MCF 10A (cell line): ENCODE measurements at regions of chr2 and their contacts with region 1.

Region 1: DNA sequence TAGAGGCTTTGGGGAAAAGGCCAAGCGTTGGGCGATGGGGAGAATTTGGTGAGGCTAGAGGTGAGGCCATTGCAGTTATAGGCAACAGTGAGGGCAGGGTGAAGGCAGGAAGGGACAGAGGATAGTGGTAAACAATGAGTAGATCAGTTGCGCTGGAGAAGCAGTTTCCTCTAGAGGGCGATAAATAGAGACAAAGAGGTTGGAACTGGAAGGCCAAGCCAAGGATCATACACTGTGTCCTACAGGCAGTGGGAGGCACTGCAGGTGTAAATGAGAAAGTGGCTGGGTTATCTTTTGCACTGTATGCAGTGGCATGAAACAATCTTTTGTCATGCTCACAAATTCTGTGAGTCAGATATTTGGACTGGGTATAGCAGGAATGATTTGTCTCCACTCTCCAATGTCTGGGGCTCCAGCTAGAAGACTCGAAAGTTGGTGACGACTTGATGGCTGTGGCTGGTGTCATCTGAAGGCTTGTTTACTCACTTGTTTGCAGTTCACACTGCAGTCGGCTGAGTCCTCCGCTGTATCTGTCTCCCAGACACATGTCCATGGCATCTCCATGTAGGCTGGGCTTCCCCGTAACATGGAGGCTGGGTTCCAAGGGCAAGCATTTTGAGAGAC is 82.1 kb downstream of the TNP1 start:
- DNase-seq: peak; percentile 88
- H3K4me3 Mint-ChIP-seq: no peak overlapping the region
- H3K27ac Mint-ChIP-seq: no peak overlapping the region
- H3K4me1 Mint-ChIP-seq: peaks cover 12% of the 10 kb centered on the region
- H3K27me3 Mint-ChIP-seq: no peaks in the 10 kb centered on the region
- CTCF ChIP-seq: peak; percentile 82

Region 2: DNA sequence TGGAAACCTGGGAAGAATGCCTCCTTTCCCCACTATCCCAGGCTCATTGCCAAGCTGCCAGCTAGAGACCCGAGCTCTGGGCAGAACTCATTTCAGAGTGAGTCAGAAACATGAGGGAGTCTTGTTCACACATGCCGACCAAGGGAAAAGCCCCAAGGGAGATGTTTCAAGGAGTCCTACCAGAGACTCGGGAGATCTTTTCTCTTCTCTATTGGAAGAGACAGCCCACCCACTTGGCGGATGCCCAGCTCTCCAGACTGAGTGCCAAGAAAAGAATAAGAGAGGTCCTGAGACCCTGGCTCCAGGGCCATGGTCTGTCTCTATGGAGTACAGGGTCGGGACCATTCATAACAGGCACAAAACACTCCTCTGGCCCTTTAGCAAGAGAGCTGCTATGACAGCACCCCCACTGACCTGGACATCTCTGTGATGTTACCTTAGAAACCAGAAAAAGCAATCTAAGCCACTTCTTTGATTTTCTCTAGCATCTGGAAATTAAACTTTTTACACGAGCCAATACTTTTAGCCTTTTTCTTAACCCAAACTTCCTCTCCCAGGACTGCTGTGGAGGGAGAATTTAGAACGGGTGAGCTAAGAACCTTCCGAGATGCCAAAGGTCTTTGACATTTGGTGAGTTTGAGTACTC is 63.9 kb before region 1 on chr2:
- CTCF ChIA-PET with region 1: no interaction called
- POLR2A ChIA-PET with region 1: interaction called, 3 read pairs
- intact Hi-C with region 1: loop called (anchors 5 kb)
- DNase-seq: peak; percentile 98
- H3K4me3 Mint-ChIP-seq: no peak overlapping the region
- H3K27ac Mint-ChIP-seq: peak overlapping the region; percentile 55
- H3K4me1 Mint-ChIP-seq: peaks cover 28% of the 10 kb centered on the region
- H3K27me3 Mint-ChIP-seq: no peaks in the 10 kb centered on the region
- CTCF ChIP-seq: no peak

Region 3: GRCh38 chr2:216789081-216789480 is 11.3 kb after region 1 on chr2:
- CTCF ChIA-PET with region 1: interaction called, 13 read pairs
- POLR2A ChIA-PET with region 1: interaction called, 3 read pairs
- intact Hi-C with region 1: no loop called
- DNase-seq: no peak
- H3K4me3 Mint-ChIP-seq: no peak overlapping the region
- H3K27ac Mint-ChIP-seq: no peak overlapping the region
- H3K4me1 Mint-ChIP-seq: peaks cover 14% of the 10 kb centered on the region
- H3K27me3 Mint-ChIP-seq: no peaks in the 10 kb centered on the region
- CTCF ChIP-seq: no peak

Region 4: DNA sequence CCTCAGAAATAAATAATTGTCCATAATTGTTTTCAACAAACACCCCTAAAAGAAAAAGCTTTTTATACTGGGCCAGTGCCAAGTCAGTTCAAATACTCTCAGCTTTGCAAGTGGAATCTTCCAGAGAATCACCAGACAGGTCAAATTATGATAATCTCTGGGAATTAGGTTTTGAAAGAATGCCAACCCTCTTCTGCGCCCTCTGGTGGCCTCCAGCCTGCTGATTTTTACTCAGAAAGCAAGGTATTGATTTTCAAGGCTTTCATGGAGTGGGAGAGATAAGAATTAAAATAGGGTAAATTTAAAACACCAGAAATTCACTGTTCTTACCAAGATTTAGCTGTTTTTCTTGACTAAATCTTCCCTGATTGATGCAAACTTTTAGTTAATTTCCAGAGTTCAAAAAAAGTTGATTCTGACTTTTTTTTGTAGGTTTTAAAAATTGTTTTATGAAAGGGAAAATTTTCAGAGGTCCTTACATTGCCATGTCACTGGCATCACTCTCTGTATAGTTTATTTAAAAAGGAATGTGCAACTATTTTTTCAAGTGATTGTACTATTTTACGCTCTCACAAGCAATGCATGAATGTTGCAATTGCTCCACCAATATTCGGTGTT is 365.0 kb after region 1 on chr2:
- CTCF ChIA-PET with region 1: no interaction called
- POLR2A ChIA-PET with region 1: no interaction called
- intact Hi-C with region 1: loop called (anchors 1 kb)
- DNase-seq: peak; percentile 55
- H3K4me3 Mint-ChIP-seq: no peak overlapping the region
- H3K27ac Mint-ChIP-seq: no peak overlapping the region
- H3K4me1 Mint-ChIP-seq: no peaks in the 10 kb centered on the region
- H3K27me3 Mint-ChIP-seq: peaks cover 8% of the 10 kb centered on the region
- CTCF ChIP-seq: peak; percentile 70

Region 5: DNA sequence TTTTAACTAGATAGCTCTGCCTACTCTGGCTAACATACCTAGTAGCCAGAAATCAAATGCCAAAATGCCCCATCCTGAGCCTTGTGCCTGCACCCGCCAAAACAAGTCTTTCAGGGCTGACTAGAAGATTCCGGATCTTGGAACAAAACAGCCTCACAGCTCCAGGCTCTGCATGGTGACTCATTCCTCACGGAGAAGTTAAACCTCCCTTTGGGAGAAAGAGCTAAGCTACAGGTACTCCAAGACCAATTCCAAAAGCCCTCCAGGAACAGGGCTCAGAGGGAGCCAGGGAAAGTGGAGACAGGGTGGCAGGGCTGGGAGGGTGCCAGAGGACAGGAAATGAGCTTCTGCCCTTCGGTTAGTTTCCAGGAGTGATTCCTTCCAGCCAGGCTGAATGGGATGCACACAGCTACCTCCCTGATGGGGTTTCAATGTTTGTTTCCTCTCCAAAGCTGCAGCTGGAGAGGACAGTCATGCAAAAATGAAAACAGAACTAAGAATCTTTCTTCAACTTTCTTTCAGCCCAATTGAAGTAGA is 929.4 kb after region 1 on chr2:
- CTCF ChIA-PET with region 1: no interaction called
- POLR2A ChIA-PET with region 1: no interaction called
- intact Hi-C with region 1: loop called (anchors 5 kb)
- DNase-seq: peak; percentile 87
- H3K4me3 Mint-ChIP-seq: no peak overlapping the region
- H3K27ac Mint-ChIP-seq: peak overlapping the region; percentile 57
- H3K4me1 Mint-ChIP-seq: peaks cover 8% of the 10 kb centered on the region
- H3K27me3 Mint-ChIP-seq: no peaks in the 10 kb centered on the region
- CTCF ChIP-seq: no peak